Activated naive CD4-positive, alpha-beta T cell treated with anti-CD3 and anti-CD28 coated beads, Interleukin-2, amount 10 ng/mL, durations not matched to agents 7 days and 5 days (primary cell): ENCODE measurements at regions of chr5 and their contacts with region 1.

Region 1: DNA sequence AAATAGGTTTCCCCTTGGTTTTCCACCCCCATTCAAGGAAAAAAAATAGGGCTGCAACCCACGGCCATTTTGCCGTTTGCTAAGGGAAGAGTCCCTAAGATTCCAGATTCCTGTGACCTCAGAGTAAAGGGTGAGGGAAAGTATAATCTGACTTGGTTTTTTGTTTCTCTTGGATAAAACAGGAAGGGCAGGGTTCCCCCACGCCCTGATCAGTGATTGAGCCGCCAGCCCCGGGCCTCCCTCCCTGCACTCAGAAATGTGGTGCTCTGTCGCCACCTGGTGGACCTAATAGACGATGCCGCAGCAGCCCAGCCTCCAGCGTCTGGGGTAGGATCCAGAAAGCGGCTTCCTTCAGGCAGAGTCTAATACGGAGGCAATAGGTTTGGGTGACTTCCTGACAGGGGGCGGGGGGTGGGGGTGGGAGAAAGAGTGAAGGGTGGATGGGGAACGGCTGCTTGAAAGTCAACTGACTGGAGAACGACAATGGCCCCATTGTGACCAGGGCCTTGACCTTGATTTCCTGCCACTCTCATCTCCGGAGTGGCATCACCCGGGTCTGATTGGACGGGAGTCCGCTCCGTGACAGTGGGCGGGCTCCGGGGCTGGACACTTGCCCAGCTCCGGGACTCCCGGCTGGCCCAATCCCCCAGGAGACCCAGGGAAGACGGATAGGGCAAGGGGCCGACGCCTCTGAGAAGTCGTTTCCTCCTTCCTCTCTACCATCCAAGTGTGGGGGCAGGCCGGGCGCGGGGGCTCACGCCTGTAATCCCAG is 17.8 kb upstream of the CYSTM1 start:
- DNase-seq: peak; percentile 90
- H3K4me3 Mint-ChIP-seq: no peak overlapping the region
- H3K27ac Mint-ChIP-seq: no peak overlapping the region
- H3K4me1 Mint-ChIP-seq: peaks cover 10% of the 10 kb centered on the region
- H3K27me3 Mint-ChIP-seq: peaks cover 7% of the 10 kb centered on the region

Region 2: GRCh38 chr5:140020601-140021177 is 136.5 kb before region 1 on chr5:
- CTCF ChIA-PET with region 1: no interaction called
- DNase-seq: no peak
- H3K4me3 Mint-ChIP-seq: no peak overlapping the region
- H3K27ac Mint-ChIP-seq: no peak overlapping the region
- H3K4me1 Mint-ChIP-seq: no peaks in the 10 kb centered on the region
- H3K27me3 Mint-ChIP-seq: peaks cover 22% of the 10 kb centered on the region

Region 3: GRCh38 chr5:140042643-140043500 is 114.3 kb before region 1 on chr5 and contains the start of gene NRG2:
- CTCF ChIA-PET with region 1: no interaction called
- DNase-seq: peak; percentile 65
- H3K4me3 Mint-ChIP-seq: peak within 1 kb of the TSS; percentile 55
- H3K27ac Mint-ChIP-seq: no peak within 1 kb of the TSS
- H3K4me1 Mint-ChIP-seq: peaks cover 21% of the 10 kb centered on the region
- H3K27me3 Mint-ChIP-seq: peaks cover 77% of the 10 kb centered on the region

Region 4: GRCh38 chr5:140060816-140061215 is 96.4 kb before region 1 on chr5:
- CTCF ChIA-PET with region 1: no interaction called
- DNase-seq: no peak
- H3K4me3 Mint-ChIP-seq: no peak overlapping the region
- H3K27ac Mint-ChIP-seq: no peak overlapping the region
- H3K4me1 Mint-ChIP-seq: no peaks in the 10 kb centered on the region
- H3K27me3 Mint-ChIP-seq: peaks cover 9% of the 10 kb centered on the region

Region 5: DNA sequence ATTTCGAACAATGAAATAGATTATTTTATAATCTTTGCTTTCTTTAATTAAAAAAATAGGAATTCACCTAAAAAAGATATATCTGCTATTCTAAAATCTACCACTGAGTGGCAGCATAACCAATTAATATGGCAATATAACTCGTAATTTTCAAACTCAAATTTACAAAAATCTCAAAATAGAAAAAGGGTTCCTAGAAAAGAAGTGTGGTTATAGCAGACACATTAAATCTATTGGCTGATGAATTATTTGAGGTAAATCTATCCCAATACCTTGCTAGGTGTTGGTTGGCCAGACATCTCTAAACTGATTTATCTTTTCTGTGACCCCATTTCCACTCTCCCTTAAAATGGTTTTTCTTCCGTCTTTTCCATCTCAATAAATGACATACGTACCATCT is 83.9 kb before region 1 on chr5:
- CTCF ChIA-PET with region 1: interaction called, 112 read pairs
- DNase-seq: no peak
- H3K4me3 Mint-ChIP-seq: no peak overlapping the region
- H3K27ac Mint-ChIP-seq: no peak overlapping the region
- H3K4me1 Mint-ChIP-seq: no peaks in the 10 kb centered on the region
- H3K27me3 Mint-ChIP-seq: peaks cover 33% of the 10 kb centered on the region